A673 (cell line): ENCODE measurements at regions of chr2 and their contacts with region 1.

Region 1: GRCh38 chr2:70412294-70413070 is 110.6 kb upstream of the FAM136A start:
- DNase-seq: no peak
- H3K4me3 ChIP-seq: no peak overlapping the region
- H3K27ac ChIP-seq: no peak overlapping the region
- H3K4me1 ChIP-seq: no peaks in the 10 kb centered on the region
- H3K27me3 ChIP-seq: peaks cover 48% of the 10 kb centered on the region
- CTCF ChIP-seq: no peak

Region 2: DNA sequence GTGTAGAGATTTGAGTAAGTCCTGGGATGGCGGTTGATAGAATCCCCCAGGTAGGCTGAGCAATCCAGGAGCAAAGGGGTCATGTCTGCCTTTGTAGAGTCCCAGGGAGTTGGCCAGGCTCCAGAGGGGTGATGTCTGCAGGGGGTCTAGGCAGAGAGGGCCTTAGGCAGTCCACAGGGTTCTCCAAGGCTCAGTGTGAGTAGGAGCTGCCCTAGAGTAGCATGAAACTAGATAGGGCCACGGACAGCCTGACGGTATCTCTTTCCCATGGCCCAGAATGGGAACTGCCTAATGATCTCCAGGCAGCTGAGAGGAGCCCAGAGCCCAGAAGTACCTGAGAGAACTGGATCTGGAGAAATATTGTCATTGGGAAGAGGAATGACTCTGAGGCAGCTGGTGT is 101.6 kb before region 1 on chr2:
- CTCF ChIA-PET with region 1: no interaction called
- POLR2A ChIA-PET with region 1: no interaction called
- intact Hi-C with region 1: no loop called
- DNase-seq: no peak
- H3K4me3 ChIP-seq: no peak overlapping the region
- H3K27ac ChIP-seq: no peak overlapping the region
- H3K4me1 ChIP-seq: no peaks in the 10 kb centered on the region
- H3K27me3 ChIP-seq: no peaks in the 10 kb centered on the region
- CTCF ChIP-seq: no peak

Region 3: GRCh38 chr2:70767699-70768589 is 355.5 kb after region 1 on chr2 and contains the start of gene ADD2:
- CTCF ChIA-PET with region 1: no interaction called
- POLR2A ChIA-PET with region 1: no interaction called
- intact Hi-C with region 1: loop called (anchors 10 kb)
- DNase-seq: peak; percentile 68
- H3K4me3 ChIP-seq: peak within 1 kb of the TSS; percentile 53
- H3K27ac ChIP-seq: no peak within 1 kb of the TSS
- H3K4me1 ChIP-seq: peaks cover 11% of the 10 kb centered on the region
- H3K27me3 ChIP-seq: peaks cover 45% of the 10 kb centered on the region
- CTCF ChIP-seq: peak; percentile 48
- total RNA-seq, gene ADD2: 5.6 and 6.6 TPM in 2 replicates

Region 4: GRCh38 chr2:70851704-70852103 is 439.2 kb after region 1 on chr2:
- CTCF ChIA-PET with region 1: no interaction called
- POLR2A ChIA-PET with region 1: no interaction called
- intact Hi-C with region 1: no loop called
- DNase-seq: no peak
- H3K4me3 ChIP-seq: no peak overlapping the region
- H3K27ac ChIP-seq: no peak overlapping the region
- H3K4me1 ChIP-seq: no peaks in the 10 kb centered on the region
- H3K27me3 ChIP-seq: no peaks in the 10 kb centered on the region
- CTCF ChIP-seq: no peak